Gastrocnemius medialis (tissue), 4 donors: ENCODE measurements at regions of chr18 and their contacts with region 1.

Region 1: GRCh38 chr18:12645254-12646203 is 12.4 kb downstream of the SPIRE1 start:
- DNase-seq: peak; percentile 78 to 87
- ATAC-seq: peak; percentile 99
- H3K4me3 ChIP-seq: peak overlapping the region in 3 of 4 donors; percentile 19 to 26 (median 24)
- H3K27ac ChIP-seq: peak overlapping the region; percentile 80 to 89 (median 82)
- H3K4me1 ChIP-seq: peaks cover 22 to 40% of the 10 kb centered on the region in 2 donors
- H3K27me3 ChIP-seq: no peaks in the 10 kb centered on the region
- CTCF ChIP-seq: no peak
- POLR2A ChIP-seq: peak in 1 of 2 donors; percentile 42

Region 2: DNA sequence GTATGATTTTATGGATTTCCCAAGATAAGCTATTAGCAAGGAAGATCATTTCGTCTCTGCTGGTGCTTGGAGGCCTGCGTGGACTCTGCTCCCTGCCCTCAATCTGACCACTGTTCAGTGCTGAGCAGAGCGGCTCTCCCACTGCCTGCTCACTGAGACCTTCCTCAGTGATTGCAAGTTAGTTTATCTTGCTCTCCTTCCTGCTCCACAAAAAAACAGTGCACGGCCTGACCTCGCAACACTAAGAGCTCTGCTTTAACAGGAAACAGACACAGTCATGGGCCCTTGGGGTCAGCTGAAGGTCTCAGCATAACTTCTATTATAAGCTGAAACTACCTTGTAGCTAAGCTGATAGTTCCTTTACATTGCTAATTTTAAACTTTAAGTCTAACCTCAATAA is 184.7 kb before region 1 on chr18:
- in situ Hi-C with region 1: no loop called
- intact Hi-C with region 1: no loop called
- DNase-seq: no peak
- ATAC-seq: no peak
- H3K4me3 ChIP-seq: no peak overlapping the region
- H3K27ac ChIP-seq: no peak overlapping the region
- H3K4me1 ChIP-seq: no peaks in the 10 kb centered on the region
- H3K27me3 ChIP-seq: no peaks in the 10 kb centered on the region
- CTCF ChIP-seq: no peak
- POLR2A ChIP-seq: no peak

Region 3: GRCh38 chr18:12531749-12532148 is 113.8 kb before region 1 on chr18:
- in situ Hi-C with region 1: loop called in 1 of 4 experiments (anchors 25 kb)
- intact Hi-C with region 1: no loop called
- DNase-seq: no peak
- ATAC-seq: peak; percentile 74 to 88
- H3K4me3 ChIP-seq: no peak overlapping the region
- H3K27ac ChIP-seq: no peak overlapping the region
- H3K4me1 ChIP-seq: peaks cover 9% of the 10 kb centered on the region in 2 donors
- H3K27me3 ChIP-seq: no peaks in the 10 kb centered on the region
- CTCF ChIP-seq: no peak
- POLR2A ChIP-seq: no peak

Region 4: GRCh38 chr18:12552884-12553242 is 92.7 kb before region 1 on chr18:
- in situ Hi-C with region 1: loop called in 2 of 4 experiments (anchors 10 to 25 kb)
- intact Hi-C with region 1: loop called (anchors 5 kb)
- DNase-seq: peak; percentile 18 to 48
- ATAC-seq: peak; percentile 39 to 72
- H3K4me3 ChIP-seq: no peak overlapping the region
- H3K27ac ChIP-seq: peak overlapping the region; percentile 61 to 88 (median 78)
- H3K4me1 ChIP-seq: peaks cover 15 to 30% of the 10 kb centered on the region in 2 donors
- H3K27me3 ChIP-seq: no peaks in the 10 kb centered on the region
- CTCF ChIP-seq: no peak
- POLR2A ChIP-seq: no peak